Natural killer cell (primary cell): ENCODE measurements at regions of chr14 and their contacts with region 1.

Region 1: GRCh38 chr14:67487937-67488893 is at the start of gene TMEM229B:
- DNase-seq: peak; percentile 73 to 87
- ATAC-seq: peak; percentile 95 to 98 (median 95)
- H3K4me3 ChIP-seq: peak within 1 kb of the TSS; percentile 68
- H3K4me3 Mint-ChIP-seq: peak within 1 kb of the TSS; percentile 90
- H3K27ac ChIP-seq: peak within 1 kb of the TSS; percentile 95
- H3K27ac Mint-ChIP-seq: peak within 1 kb of the TSS; percentile 95
- H3K4me1 ChIP-seq: peaks cover 51% of the 10 kb centered on the region
- H3K4me1 Mint-ChIP-seq: peaks cover 46 to 76% of the 10 kb centered on the region in 2 donors
- H3K27me3 ChIP-seq: no peaks in the 10 kb centered on the region
- H3K27me3 Mint-ChIP-seq: no peaks in the 10 kb centered on the region
- CTCF ChIP-seq: no peak
- total RNA-seq, gene TMEM229B: 28.3 to 51.3 (median 49.9) TPM

Region 2: DNA sequence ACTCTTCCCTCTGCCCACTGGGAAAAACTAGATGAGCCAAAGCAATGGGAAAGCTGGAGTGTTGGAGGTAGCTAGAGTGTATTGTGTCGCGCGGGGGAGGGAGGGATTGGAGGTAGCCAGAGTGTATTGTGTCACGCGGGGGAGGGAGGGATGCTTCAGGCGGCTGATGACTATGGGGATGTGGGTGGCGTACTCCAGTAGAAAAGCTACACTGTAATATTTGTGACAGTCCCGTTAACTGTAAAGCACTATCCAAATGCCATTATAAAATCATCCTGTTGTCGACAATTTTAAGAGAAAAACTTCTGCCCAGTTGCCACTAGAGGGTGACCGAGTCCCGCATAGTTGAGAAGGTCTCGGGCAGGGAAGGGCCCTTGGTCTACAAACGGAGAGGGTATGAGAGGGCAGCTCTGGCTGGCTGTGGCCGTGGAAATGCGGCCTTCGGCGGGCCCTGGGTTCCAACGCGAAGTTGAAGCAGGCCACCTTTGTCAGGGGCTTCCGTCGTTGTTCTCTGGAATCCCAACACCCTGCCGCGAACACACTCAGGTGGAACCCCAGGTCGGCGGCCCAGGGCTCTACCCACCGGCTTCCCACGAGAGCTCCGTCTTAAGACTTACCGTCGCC is 61.1 kb before region 1 on chr14:
- intact Hi-C with region 1: no loop called
- DNase-seq: peak; percentile 65 to 89
- ATAC-seq: peak; percentile 87 to 99 (median 98)
- H3K4me3 ChIP-seq: no peak overlapping the region
- H3K4me3 Mint-ChIP-seq: no peak overlapping the region
- H3K27ac ChIP-seq: no peak overlapping the region
- H3K27ac Mint-ChIP-seq: no peak overlapping the region
- H3K4me1 ChIP-seq: peaks cover 6% of the 10 kb centered on the region
- H3K4me1 Mint-ChIP-seq: no peaks in the 10 kb centered on the region
- H3K27me3 ChIP-seq: no peaks in the 10 kb centered on the region
- H3K27me3 Mint-ChIP-seq: peaks cover 18 to 19% of the 10 kb centered on the region in 2 donors
- CTCF ChIP-seq: peak; percentile 90

Region 3: GRCh38 chr14:67467179-67468080 is 20.8 kb before region 1 on chr14:
- intact Hi-C with region 1: loop called (anchors 1 kb)
- DNase-seq: peak; percentile 26 to 34
- ATAC-seq: peak; percentile 72 to 95 (median 90)
- H3K4me3 ChIP-seq: no peak overlapping the region
- H3K4me3 Mint-ChIP-seq: peak overlapping the region; percentile 77
- H3K27ac ChIP-seq: no peak overlapping the region
- H3K27ac Mint-ChIP-seq: peak overlapping the region; percentile 23 to 50
- H3K4me1 ChIP-seq: peaks cover 32% of the 10 kb centered on the region
- H3K4me1 Mint-ChIP-seq: peaks cover 25 to 63% of the 10 kb centered on the region in 2 donors
- H3K27me3 ChIP-seq: no peaks in the 10 kb centered on the region
- H3K27me3 Mint-ChIP-seq: peaks cover 0 to 14% of the 10 kb centered on the region in 2 donors
- CTCF ChIP-seq: no peak

Region 4: DNA sequence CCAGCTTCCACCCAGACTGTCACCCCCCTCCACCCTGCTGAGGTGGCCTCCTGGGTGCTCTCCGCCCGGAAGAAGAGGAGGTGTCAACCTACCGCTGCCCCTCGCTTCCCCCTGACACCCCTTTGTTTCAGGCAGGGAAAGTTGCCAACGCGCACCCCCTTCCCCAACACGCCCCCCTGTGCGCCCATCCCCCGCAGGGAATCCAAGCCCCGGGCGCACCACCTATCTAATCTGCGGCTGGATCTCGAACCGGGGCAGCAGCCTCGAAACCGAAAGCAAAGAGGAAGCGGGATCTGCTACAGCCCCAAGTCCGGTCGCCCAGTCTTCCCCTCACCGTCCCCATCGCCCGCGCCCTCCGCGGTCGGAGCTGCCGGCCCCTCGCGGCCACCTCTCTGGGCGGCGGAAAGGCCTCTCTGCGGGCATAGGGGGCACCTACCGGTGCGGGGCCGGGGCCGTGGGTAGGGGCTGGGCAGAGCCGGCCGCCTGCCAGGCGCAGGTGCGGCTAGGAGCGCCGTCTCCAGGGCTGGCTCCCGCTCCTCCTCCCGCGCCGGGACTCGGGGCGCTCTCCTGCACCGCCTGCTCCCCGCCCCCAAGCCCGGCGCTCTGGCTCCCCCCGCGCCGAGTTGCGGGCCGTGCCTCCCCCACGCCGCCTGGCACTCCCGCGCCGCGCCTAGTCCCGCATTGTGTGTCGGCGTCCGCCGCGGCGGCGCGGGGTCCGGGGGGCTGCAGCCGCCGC is 26.6 kb after region 1 on chr14:
- intact Hi-C with region 1: loop called (anchors 1 kb)
- DNase-seq: peak; percentile 43 to 71
- ATAC-seq: peak; percentile 66 to 69 (median 66)
- H3K4me3 ChIP-seq: peak overlapping the region; percentile 60
- H3K4me3 Mint-ChIP-seq: peak overlapping the region; percentile 93
- H3K27ac ChIP-seq: peak overlapping the region; percentile 68
- H3K27ac Mint-ChIP-seq: peak overlapping the region; percentile 79 to 95
- H3K4me1 ChIP-seq: peaks cover 24% of the 10 kb centered on the region
- H3K4me1 Mint-ChIP-seq: peaks cover 25 to 34% of the 10 kb centered on the region in 2 donors
- H3K27me3 ChIP-seq: no peaks in the 10 kb centered on the region
- H3K27me3 Mint-ChIP-seq: peaks cover 7% of the 10 kb centered on the region in 2 donors
- CTCF ChIP-seq: no peak